Activated CD4-positive, alpha-beta T cell treated with anti-CD3 and anti-CD28 coated beads for 36 hours (primary cell): ENCODE measurements at regions of chr13 and their contacts with region 1.

Region 1: GRCh38 chr13:27792393-27793218 is at the start of gene GSX1:
- DNase-seq: peak; percentile 74
- ATAC-seq: peak; percentile 69
- H3K4me3 Mint-ChIP-seq: peak within 1 kb of the TSS; percentile 69
- H3K27ac Mint-ChIP-seq: no peak within 1 kb of the TSS
- H3K4me1 Mint-ChIP-seq: peaks cover 36% of the 10 kb centered on the region
- H3K27me3 Mint-ChIP-seq: peaks cover 72% of the 10 kb centered on the region
- total RNA-seq, gene GSX1: not detected

Region 2: DNA sequence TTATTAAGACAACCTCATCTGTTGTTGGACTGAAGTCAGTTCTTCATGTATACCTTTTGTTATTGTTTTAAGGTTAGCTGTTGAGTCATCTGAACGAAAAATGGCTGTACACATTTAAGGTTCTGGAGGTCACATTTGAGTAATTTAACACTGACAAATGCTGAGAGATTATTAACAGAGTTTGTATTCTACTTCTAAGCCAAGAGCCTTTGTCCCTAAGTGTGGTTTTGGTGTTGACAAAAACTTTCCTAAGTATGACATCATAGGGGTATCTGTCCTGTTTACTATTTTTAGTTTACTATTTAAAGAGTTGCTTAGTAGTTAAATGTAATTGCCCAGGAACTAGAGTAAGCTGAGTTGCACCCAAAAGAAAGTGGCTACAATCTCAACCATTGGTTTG is 1466.7 kb before region 1 on chr13:
- CTCF ChIA-PET with region 1: no interaction called
- POLR2A ChIA-PET with region 1: no interaction called
- intact Hi-C with region 1: no loop called
- DNase-seq: no peak
- ATAC-seq: no peak
- H3K4me3 Mint-ChIP-seq: no peak overlapping the region
- H3K27ac Mint-ChIP-seq: no peak overlapping the region
- H3K4me1 Mint-ChIP-seq: peaks cover 53% of the 10 kb centered on the region
- H3K27me3 Mint-ChIP-seq: no peaks in the 10 kb centered on the region

Region 3: DNA sequence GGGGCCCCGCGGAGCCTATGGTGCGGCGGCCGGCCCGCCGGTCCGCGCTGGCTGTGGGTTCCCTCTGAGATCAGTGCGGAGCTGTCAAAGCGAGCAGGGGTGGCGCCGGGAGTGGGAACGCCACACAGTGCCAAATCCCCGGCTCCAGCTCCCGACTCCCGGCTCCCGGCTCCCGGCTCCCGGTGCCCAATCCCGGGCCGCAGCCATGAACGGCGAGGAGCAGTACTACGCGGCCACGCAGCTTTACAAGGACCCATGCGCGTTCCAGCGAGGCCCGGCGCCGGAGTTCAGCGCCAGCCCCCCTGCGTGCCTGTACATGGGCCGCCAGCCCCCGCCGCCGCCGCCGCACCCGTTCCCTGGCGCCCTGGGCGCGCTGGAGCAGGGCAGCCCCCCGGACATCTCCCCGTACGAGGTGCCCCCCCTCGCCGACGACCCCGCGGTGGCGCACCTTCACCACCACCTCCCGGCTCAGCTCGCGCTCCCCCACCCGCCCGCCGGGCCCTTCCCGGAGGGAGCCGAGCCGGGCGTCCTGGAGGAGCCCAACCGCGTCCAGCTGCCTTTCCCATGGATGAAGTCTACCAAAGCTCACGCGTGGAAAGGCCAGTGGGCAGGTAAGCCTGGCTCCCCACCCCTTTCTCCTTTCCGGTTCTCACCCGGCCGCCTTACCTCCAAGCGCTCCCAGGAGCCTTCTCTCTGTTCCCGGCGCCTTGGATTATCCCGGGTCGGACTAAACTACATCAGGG is 127.5 kb after region 1 on chr13 and contains the start of gene PDX1:
- CTCF ChIA-PET with region 1: no interaction called
- POLR2A ChIA-PET with region 1: no interaction called
- intact Hi-C with region 1: loop called (anchors 2 to 5 kb)
- DNase-seq: no peak
- ATAC-seq: peak; percentile 28
- H3K4me3 Mint-ChIP-seq: peak within 1 kb of the TSS; percentile 67
- H3K27ac Mint-ChIP-seq: no peak within 1 kb of the TSS
- H3K4me1 Mint-ChIP-seq: peaks cover 26% of the 10 kb centered on the region
- H3K27me3 Mint-ChIP-seq: peaks cover 68% of the 10 kb centered on the region
- total RNA-seq, gene PDX1: not detected

Region 4: GRCh38 chr13:27968316-27969081 is 175.9 kb after region 1 on chr13:
- CTCF ChIA-PET with region 1: no interaction called
- POLR2A ChIA-PET with region 1: no interaction called
- intact Hi-C with region 1: loop called in 1 of 2 experiments (anchors 2 kb)
- DNase-seq: peak; percentile 38
- ATAC-seq: peak; percentile 12
- H3K4me3 Mint-ChIP-seq: no peak overlapping the region
- H3K27ac Mint-ChIP-seq: no peak overlapping the region
- H3K4me1 Mint-ChIP-seq: peaks cover 24% of the 10 kb centered on the region
- H3K27me3 Mint-ChIP-seq: peaks cover 73% of the 10 kb centered on the region

Region 5: GRCh38 chr13:27977476-27978300 is 185.1 kb after region 1 on chr13:
- CTCF ChIA-PET with region 1: interaction called, 5 read pairs
- POLR2A ChIA-PET with region 1: no interaction called
- intact Hi-C with region 1: loop called in 1 of 2 experiments (anchors 5 kb)
- DNase-seq: no peak
- ATAC-seq: no peak
- H3K4me3 Mint-ChIP-seq: no peak overlapping the region
- H3K27ac Mint-ChIP-seq: no peak overlapping the region
- H3K4me1 Mint-ChIP-seq: peaks cover 15% of the 10 kb centered on the region
- H3K27me3 Mint-ChIP-seq: peaks cover 79% of the 10 kb centered on the region

Region 6: DNA sequence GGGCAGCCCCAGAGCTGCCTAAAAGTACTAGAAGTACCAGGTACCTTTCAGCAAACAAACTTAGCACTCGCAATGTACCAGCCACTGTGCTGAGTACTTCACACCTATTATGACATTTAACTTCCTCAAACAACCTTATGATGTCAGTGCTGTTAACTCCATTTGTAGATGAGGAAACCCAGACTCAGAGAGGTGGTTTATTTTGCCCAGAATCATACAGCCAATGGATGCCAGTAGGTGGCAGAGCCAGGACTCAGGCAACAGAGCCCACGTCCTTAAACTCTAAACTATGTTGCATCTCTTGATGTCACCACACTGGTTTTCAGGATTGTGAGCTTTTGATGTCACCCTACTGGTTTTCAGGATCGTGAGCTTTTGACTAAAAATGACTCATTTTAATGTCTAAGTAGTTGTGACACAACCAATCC is 623.4 kb after region 1 on chr13:
- CTCF ChIA-PET with region 1: no interaction called
- POLR2A ChIA-PET with region 1: no interaction called
- intact Hi-C with region 1: no loop called
- DNase-seq: peak; percentile 11
- ATAC-seq: peak; percentile 69
- H3K4me3 Mint-ChIP-seq: no peak overlapping the region
- H3K27ac Mint-ChIP-seq: no peak overlapping the region
- H3K4me1 Mint-ChIP-seq: peaks cover 5% of the 10 kb centered on the region
- H3K27me3 Mint-ChIP-seq: no peaks in the 10 kb centered on the region